T-cell (primary cell): ENCODE measurements at regions of chr15 and their contacts with region 1.

Region 1: GRCh38 chr15:90648137-90649070 is 68.7 kb upstream of the BLM start:
- DNase-seq: peak in 30 of 35 experiments; percentile 10 to 82 (median 44)
- ATAC-seq: peak; percentile 66 to 77 (median 70)
- H3K4me3 ChIP-seq: no peak overlapping the region
- H3K4me3 Mint-ChIP-seq: peak overlapping the region in 2 of 3 donors; percentile 42 to 68
- H3K27ac ChIP-seq: no peak overlapping the region
- H3K27ac Mint-ChIP-seq: peak overlapping the region in 1 of 2 donors; percentile 45
- H3K4me1 ChIP-seq: peaks cover 6 to 19% of the 10 kb centered on the region in 2 experiments
- H3K4me1 Mint-ChIP-seq: peaks cover 23 to 40% (median 39%) of the 10 kb centered on the region in 3 donors
- H3K27me3 ChIP-seq: peaks cover 0 to 16% of the 10 kb centered on the region in 2 experiments
- H3K27me3 Mint-ChIP-seq: no peaks in the 10 kb centered on the region

Region 2: GRCh38 chr15:90716976-90717821 is 68.8 kb after region 1 on chr15 and contains the start of gene BLM:
- CTCF ChIA-PET with region 1: interaction called in 1 of 2 experiments, 12 read pairs
- POLR2A ChIA-PET with region 1: no interaction called
- DNase-seq: peak; percentile 90 to 97 (median 94)
- ATAC-seq: peak; percentile 99 to 100 (median 99)
- H3K4me3 ChIP-seq: peak within 1 kb of the TSS; percentile 77 to 99
- H3K4me3 Mint-ChIP-seq: peak within 1 kb of the TSS; percentile 96 to 98 (median 96)
- H3K27ac ChIP-seq: peak within 1 kb of the TSS; percentile 77
- H3K27ac Mint-ChIP-seq: peak within 1 kb of the TSS; percentile 97
- H3K4me1 ChIP-seq: peaks cover 8 to 14% of the 10 kb centered on the region in 2 experiments
- H3K4me1 Mint-ChIP-seq: peaks cover 22 to 34% (median 32%) of the 10 kb centered on the region in 3 donors
- H3K27me3 ChIP-seq: no peaks in the 10 kb centered on the region
- H3K27me3 Mint-ChIP-seq: no peaks in the 10 kb centered on the region
- total RNA-seq, gene BLM: 4.9 to 9.4 (median 6.2) TPM

Region 3: DNA sequence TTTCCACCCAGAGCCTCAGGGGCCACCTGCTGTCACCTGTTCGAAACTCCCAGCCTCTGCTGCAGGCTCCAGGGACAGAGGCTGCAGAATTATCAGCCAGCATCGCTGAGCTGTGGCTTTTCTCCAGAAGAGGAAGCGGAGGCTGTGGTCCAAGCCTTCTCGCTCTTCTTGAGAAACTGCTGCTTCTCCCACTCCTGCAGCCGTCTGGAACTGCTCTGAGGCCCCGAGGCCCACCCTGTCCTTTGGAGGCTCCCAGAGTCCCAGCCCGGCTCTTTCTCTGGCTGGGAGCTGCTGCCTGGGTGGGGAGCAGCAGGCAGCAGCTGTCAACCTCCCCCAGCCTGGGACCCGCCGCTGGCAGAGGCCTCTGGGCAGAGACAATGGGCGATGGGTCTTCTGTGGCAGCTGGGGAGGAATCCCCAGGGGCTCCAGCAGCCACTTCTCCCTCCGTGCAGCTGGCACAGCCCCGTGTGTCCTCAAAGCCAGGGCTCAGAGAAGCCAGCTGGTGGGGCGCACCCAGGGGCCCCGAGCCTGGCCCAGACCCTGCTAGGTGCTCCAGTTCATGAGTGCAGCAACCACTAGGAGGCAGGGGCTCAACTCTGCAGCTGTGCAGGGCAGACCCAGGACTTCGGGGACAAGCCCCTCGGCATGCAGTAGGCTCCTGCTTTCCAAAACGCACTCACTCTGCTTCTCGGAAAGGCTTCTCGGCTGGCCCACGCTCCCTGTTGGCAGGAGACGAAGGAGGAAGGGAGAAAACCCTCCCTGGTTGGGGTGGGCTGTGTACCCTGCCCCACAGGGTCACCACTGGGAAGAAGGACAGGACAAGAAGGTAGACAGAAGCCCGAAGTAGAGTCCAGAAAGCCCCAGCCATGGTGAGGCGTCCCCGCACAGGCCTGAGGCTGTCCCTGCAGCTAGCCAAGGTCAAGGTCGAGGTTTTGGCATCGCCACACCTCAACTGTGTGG is 170.1 kb after region 1 on chr15:
- CTCF ChIA-PET with region 1: no interaction called
- POLR2A ChIA-PET with region 1: no interaction called
- DNase-seq: peak in 13 of 35 experiments; percentile 14 to 58 (median 26)
- ATAC-seq: peak; percentile 33 to 85 (median 43)
- H3K4me3 ChIP-seq: no peak overlapping the region
- H3K4me3 Mint-ChIP-seq: peak overlapping the region in 2 of 3 donors; percentile 24 to 37
- H3K27ac ChIP-seq: no peak overlapping the region
- H3K27ac Mint-ChIP-seq: peak overlapping the region; percentile 34 to 61
- H3K4me1 ChIP-seq: peaks cover 2 to 48% of the 10 kb centered on the region in 2 experiments
- H3K4me1 Mint-ChIP-seq: peaks cover 12 to 40% (median 38%) of the 10 kb centered on the region in 3 donors
- H3K27me3 ChIP-seq: peaks cover 0 to 3% of the 10 kb centered on the region in 2 experiments
- H3K27me3 Mint-ChIP-seq: no peaks in the 10 kb centered on the region

Region 4: GRCh38 chr15:90886041-90886614 is 237.7 kb after region 1 on chr15:
- CTCF ChIA-PET with region 1: interaction called, 4 to 23 read pairs
- POLR2A ChIA-PET with region 1: no interaction called
- DNase-seq: peak; percentile 29 to 84 (median 71)
- ATAC-seq: peak; percentile 52 to 68 (median 64)
- H3K4me3 ChIP-seq: no peak overlapping the region
- H3K4me3 Mint-ChIP-seq: no peak overlapping the region
- H3K27ac ChIP-seq: no peak overlapping the region
- H3K27ac Mint-ChIP-seq: peak overlapping the region in 1 of 2 donors; percentile 16
- H3K4me1 ChIP-seq: peaks cover 4 to 39% of the 10 kb centered on the region in 2 experiments
- H3K4me1 Mint-ChIP-seq: peaks cover 5 to 17% (median 16%) of the 10 kb centered on the region in 3 donors
- H3K27me3 ChIP-seq: peaks cover 0 to 48% of the 10 kb centered on the region in 2 experiments
- H3K27me3 Mint-ChIP-seq: peaks cover 4 to 7% of the 10 kb centered on the region in 2 donors